Activated naive CD8-positive, alpha-beta T cell treated with anti-CD3 and anti-CD28 coated beads, Interleukin-2, amount 10 ng/mL, durations not matched to agents 7 days and 5 days (primary cell): ENCODE measurements at regions of chr22 and their contacts with region 1.

Region 1: GRCh38 chr22:36481393-36482168 is at the start of gene TXN2:
- DNase-seq: peak; percentile 95
- ATAC-seq: peak; percentile 90
- H3K4me3 Mint-ChIP-seq: peak within 1 kb of the TSS; percentile 99
- H3K27ac Mint-ChIP-seq: peak within 1 kb of the TSS; percentile 98
- H3K4me1 Mint-ChIP-seq: peaks cover 11% of the 10 kb centered on the region
- H3K27me3 Mint-ChIP-seq: no peaks in the 10 kb centered on the region
- total RNA-seq, gene TXN2: 64.5 to 64.6 TPM

Region 2: GRCh38 chr22:35894937-35895708 is 586.5 kb before region 1 on chr22:
- POLR2A ChIA-PET with region 1: no interaction called
- DNase-seq: no peak
- ATAC-seq: no peak
- H3K4me3 Mint-ChIP-seq: no peak overlapping the region
- H3K27ac Mint-ChIP-seq: no peak overlapping the region
- H3K4me1 Mint-ChIP-seq: no peaks in the 10 kb centered on the region
- H3K27me3 Mint-ChIP-seq: peaks cover 14% of the 10 kb centered on the region

Region 3: DNA sequence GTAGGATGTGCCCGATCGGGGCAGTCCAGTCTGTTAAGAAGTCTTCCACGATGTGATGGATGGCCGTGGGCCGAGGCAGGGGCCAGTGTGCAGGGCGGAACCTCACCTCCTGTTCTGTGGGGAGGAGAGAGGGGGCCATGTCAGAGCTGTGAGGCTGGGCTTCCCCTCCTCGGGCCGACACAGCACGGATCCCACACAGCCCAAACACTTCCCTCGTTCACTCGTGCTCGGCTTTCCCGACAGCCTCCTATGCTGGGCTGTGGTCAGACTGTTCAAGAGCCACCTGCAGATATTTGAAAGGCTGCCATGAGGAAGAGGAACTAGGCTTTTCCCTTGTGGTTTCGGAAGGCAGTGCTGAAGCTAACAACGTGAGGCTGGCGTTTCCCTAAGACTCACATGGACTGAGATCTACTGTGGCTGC is 12.1 kb after region 1 on chr22:
- POLR2A ChIA-PET with region 1: interaction called, 12 read pairs
- DNase-seq: no peak
- ATAC-seq: peak; percentile 32
- H3K4me3 Mint-ChIP-seq: no peak overlapping the region
- H3K27ac Mint-ChIP-seq: no peak overlapping the region
- H3K4me1 Mint-ChIP-seq: peaks cover 4% of the 10 kb centered on the region
- H3K27me3 Mint-ChIP-seq: no peaks in the 10 kb centered on the region

Region 4: DNA sequence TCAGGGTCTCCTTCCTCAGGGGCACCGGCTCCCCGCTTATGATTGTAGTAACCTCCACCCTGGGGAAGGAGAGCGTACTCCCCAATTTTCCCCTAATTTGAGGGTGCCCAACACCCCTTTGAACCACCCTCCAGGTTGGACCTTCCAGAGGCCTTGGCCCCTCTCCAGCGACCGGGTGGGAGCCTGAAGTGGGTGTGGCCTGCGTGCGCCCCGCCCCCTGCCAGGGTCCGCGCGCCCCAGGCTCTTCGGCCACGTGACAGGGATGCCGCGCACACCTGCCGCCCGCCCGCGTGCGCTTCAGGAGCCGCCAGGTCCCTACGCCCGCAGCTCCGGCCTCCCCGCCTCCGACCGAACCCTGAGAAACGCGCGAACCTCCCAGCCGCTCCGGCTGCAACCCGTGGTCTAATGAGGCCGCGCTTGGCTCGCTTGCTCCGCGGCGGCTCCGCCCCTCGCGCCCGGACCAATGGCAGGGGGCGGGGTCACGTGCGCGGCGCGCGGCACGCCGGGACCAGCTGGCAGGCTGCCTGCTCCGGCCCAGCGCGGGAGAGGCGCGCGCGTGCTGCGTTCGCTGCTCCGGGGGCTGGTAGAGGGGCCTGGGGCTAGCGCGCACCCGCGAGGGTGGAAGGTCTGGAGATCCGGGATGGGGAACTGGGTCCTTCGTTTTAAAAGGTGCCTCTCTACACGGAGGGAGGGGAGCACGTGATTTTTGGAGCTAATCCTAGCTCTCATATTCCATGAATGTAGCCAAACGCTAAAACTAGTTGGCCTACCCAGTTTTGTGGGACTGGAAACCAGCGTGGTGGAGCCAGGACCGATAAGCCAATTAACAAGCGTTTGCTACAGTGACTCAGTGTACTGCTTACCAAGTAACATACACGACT is 25.3 kb after region 1 on chr22 and contains the start of gene FOXRED2:
- POLR2A ChIA-PET with region 1: interaction called, 13 read pairs
- DNase-seq: peak; percentile 97
- ATAC-seq: peak; percentile 95
- H3K4me3 Mint-ChIP-seq: peak within 1 kb of the TSS; percentile 76
- H3K27ac Mint-ChIP-seq: peak within 1 kb of the TSS; percentile 70
- H3K4me1 Mint-ChIP-seq: peaks cover 14% of the 10 kb centered on the region
- H3K27me3 Mint-ChIP-seq: no peaks in the 10 kb centered on the region
- total RNA-seq, gene FOXRED2: 10.9 to 12.0 TPM